ENCODE measurements at regions of chr6 and their contacts with region 1.

Region 1: GRCh38 chr6:3120765-3121089 is 2.2 kb downstream of the BPHL start:
- DNase-seq: no peak
- ATAC-seq: no peak
- H3K4me3 ChIP-seq: no peak overlapping the region
- H3K4me3 Mint-ChIP-seq: no peak overlapping the region
- H3K27ac ChIP-seq: no peak overlapping the region
- H3K27ac Mint-ChIP-seq: no peak overlapping the region
- H3K4me1 ChIP-seq: peaks cover 0 to 11% of the 10 kb centered on the region in 2 experiments
- H3K4me1 Mint-ChIP-seq: peaks cover 15 to 16% (median 16%) of the 10 kb centered on the region in 3 donors
- H3K27me3 ChIP-seq: no peaks in the 10 kb centered on the region
- H3K27me3 Mint-ChIP-seq: no peaks in the 10 kb centered on the region

Region 2: GRCh38 chr6:3094815-3095214 is 25.9 kb before region 1 on chr6:
- CTCF ChIA-PET with region 1: no interaction called
- POLR2A ChIA-PET with region 1: no interaction called
- DNase-seq: no peak
- ATAC-seq: no peak
- H3K4me3 ChIP-seq: no peak overlapping the region
- H3K4me3 Mint-ChIP-seq: no peak overlapping the region
- H3K27ac ChIP-seq: no peak overlapping the region
- H3K27ac Mint-ChIP-seq: no peak overlapping the region
- H3K4me1 ChIP-seq: no peaks in the 10 kb centered on the region
- H3K4me1 Mint-ChIP-seq: peaks cover 0 to 2% (median 0%) of the 10 kb centered on the region in 3 donors
- H3K27me3 ChIP-seq: no peaks in the 10 kb centered on the region
- H3K27me3 Mint-ChIP-seq: no peaks in the 10 kb centered on the region

Region 3: DNA sequence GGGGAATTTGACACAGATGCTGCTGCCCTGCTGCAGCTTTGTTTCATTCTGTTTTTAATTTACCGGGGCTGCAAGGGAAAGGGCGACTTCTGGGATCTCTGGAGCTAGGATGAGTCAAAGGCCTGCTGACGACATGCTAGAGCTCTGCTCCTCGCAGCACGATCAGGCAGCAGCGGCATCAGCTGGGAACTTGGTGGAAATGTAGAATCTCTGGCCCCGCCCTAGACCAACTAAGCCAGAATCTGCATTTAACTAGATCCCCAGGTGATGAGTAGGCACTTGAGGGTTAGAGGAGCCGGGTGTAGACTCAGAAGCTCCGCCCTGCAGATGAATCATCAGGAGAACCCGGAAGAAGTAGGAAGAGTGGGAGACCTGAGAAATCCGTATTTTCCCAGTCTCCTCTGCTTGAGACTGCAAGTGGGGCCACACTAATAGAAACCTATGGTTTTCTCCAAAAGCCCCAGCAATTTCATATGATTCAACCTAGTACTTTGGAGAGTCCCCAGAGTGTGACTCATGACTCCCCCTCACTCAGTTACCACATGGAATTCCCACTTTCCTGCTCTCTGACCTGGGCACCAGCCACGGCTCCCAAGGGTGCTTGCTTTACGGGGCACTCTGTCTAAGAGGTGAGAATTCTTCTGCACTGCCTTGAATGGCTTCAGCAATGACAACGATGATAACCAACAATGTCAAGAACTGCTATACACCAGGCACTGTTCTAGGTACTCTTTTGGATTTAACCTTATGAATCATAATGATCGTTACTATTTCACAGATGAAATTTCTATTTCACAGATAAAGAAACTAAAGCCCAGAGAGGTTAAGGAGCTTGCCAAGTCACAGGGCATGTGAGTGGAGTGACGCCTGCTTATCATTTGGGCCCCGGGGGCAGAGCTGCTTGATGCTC is 88.6 kb after region 1 on chr6:
- CTCF ChIA-PET with region 1: interaction called in 1 of 2 experiments, 11 read pairs
- POLR2A ChIA-PET with region 1: no interaction called
- DNase-seq: peak in 1 of 35 experiments; percentile 40
- ATAC-seq: peak in 3 of 4 experiments; percentile 31 to 73 (median 60)
- H3K4me3 ChIP-seq: no peak overlapping the region
- H3K4me3 Mint-ChIP-seq: peak overlapping the region in 1 of 3 donors; percentile 8
- H3K27ac ChIP-seq: no peak overlapping the region
- H3K27ac Mint-ChIP-seq: peak overlapping the region in 1 of 2 donors; percentile 24
- H3K4me1 ChIP-seq: peaks cover 0 to 11% of the 10 kb centered on the region in 2 experiments
- H3K4me1 Mint-ChIP-seq: peaks cover 10 to 15% (median 13%) of the 10 kb centered on the region in 3 donors
- H3K27me3 ChIP-seq: peaks cover 0 to 20% of the 10 kb centered on the region in 2 experiments
- H3K27me3 Mint-ChIP-seq: peaks cover 21 to 22% of the 10 kb centered on the region in 2 donors